MCF 10A (cell line): ENCODE measurements at regions of chr15 and their contacts with region 1.

Region 1: DNA sequence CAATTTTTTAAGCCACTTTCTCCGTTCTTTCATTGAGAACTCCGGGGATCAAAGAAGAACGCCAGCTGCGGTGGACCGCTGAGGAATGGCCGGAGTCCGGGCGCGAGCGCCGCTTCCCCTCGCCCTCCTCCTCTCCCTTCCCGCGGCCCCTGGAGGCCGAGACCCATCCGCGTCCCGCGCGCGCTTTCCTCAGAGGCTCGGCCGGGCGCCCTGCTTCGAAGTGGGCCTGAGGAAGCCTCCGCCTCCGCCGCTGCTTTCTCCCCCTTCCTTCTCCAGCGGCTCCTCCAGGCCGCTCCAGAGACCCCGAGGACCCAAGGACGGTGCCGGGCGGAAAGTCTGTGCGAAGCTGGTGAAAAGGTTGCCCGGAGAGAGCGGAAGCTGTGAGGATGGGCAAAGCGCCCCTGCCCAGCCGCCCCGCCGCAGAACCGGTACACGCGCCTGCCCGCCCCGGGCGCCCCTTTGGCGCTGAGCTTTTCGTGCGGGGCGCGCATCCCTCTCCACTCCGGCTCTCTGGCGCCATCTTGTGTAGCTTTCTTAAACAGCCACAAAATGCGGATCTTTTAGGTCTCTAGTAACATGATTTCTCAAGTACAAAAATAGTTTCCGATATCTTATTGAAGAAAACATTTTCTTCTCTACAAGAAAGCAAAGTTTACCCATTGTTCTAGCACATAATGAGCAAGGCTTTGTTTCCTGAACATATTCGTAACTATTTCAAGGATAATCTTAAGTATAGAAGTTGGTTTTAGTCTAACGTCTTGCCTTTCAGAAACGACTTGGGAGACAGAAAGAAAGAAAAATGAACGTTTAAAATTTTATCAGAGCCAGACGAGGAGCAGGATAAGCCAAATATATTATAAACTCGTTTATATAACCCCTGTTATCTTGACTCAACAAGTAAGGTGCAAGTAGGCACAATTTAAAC is 59.2 kb upstream of the FAM174B start:
- DNase-seq: peak; percentile 67
- H3K4me3 Mint-ChIP-seq: peak overlapping the region; percentile 69
- H3K27ac Mint-ChIP-seq: no peak overlapping the region
- H3K4me1 Mint-ChIP-seq: no peaks in the 10 kb centered on the region
- H3K27me3 Mint-ChIP-seq: peaks cover 12% of the 10 kb centered on the region
- CTCF ChIP-seq: peak; percentile 89

Region 2: DNA sequence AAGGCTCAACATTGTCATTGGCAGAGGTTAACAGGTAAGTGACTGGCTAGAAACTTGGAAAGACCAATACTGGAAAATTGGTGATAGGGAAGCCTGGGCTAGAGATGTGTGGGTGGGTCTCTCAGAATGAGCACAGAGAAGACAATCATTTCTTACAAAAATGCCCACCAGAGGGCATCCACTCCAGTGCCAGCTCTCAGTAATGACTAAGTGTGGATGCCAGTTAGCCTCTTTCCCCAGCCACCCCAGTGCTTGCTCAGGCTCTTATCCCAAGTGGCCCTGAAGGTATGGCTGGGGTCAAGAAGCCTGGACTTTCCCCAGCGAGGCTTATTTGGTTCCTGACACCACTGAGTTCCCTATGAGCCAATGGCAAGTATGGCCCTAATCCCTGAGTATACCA is 437.0 kb before region 1 on chr15:
- CTCF ChIA-PET with region 1: interaction called, 6 read pairs
- POLR2A ChIA-PET with region 1: interaction called, 3 read pairs
- intact Hi-C with region 1: loop called (anchors 1 kb)
- DNase-seq: peak; percentile 53
- H3K4me3 Mint-ChIP-seq: no peak overlapping the region
- H3K27ac Mint-ChIP-seq: no peak overlapping the region
- H3K4me1 Mint-ChIP-seq: no peaks in the 10 kb centered on the region
- H3K27me3 Mint-ChIP-seq: peaks cover 29% of the 10 kb centered on the region
- CTCF ChIP-seq: peak; percentile 32

Region 3: DNA sequence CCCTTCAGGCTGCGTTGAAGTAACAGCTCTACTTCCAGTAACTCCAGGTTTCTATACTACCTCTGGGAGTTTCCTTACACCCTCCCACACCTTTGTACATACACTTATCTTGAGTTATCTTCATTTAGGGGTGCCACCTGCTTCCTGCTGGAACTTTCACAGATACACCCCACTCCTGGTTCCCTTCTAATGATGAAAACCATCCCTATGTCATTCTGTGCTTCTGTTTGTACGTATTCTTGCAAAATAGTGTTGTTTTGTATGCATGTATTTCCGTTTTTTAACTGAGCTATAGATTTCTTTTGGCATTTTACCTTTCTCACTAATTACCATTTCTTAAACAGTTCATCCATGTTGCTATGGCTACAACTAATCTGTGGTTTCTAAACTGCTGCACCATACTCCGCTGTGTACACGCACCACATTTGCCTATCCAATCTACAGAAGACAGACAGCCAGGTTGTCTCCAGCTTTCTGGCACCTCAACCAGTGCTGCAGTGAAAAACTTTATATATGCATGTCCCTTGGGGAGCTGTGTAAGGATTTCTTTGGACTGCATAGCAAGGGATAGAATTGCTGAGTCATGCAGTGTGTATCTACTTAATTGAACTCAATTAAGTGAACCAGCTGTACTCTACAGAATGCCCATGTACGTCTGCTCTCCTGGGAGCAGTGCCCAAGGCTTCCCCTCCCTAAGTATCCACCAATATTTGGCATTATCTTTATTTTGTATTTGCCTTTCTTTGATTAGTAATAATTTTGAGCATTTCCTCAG is 382.4 kb before region 1 on chr15:
- CTCF ChIA-PET with region 1: no interaction called
- POLR2A ChIA-PET with region 1: no interaction called
- intact Hi-C with region 1: loop called (anchors 10 kb)
- DNase-seq: no peak
- H3K4me3 Mint-ChIP-seq: no peak overlapping the region
- H3K27ac Mint-ChIP-seq: no peak overlapping the region
- H3K4me1 Mint-ChIP-seq: no peaks in the 10 kb centered on the region
- H3K27me3 Mint-ChIP-seq: peaks cover 29% of the 10 kb centered on the region
- CTCF ChIP-seq: no peak

Region 4: GRCh38 chr15:92391640-92392039 is 323.1 kb before region 1 on chr15:
- CTCF ChIA-PET with region 1: interaction called, 3 read pairs
- POLR2A ChIA-PET with region 1: no interaction called
- intact Hi-C with region 1: loop called (anchors 5 kb)
- DNase-seq: peak; percentile 51
- H3K4me3 Mint-ChIP-seq: no peak overlapping the region
- H3K27ac Mint-ChIP-seq: no peak overlapping the region
- H3K4me1 Mint-ChIP-seq: no peaks in the 10 kb centered on the region
- H3K27me3 Mint-ChIP-seq: peaks cover 100% of the 10 kb centered on the region
- CTCF ChIP-seq: no peak

Region 5: GRCh38 chr15:92521624-92522008 is 193.1 kb before region 1 on chr15:
- CTCF ChIA-PET with region 1: interaction called, 58 read pairs
- POLR2A ChIA-PET with region 1: interaction called, 5 read pairs
- intact Hi-C with region 1: loop called (anchors 1 kb)
- DNase-seq: peak; percentile 77
- H3K4me3 Mint-ChIP-seq: no peak overlapping the region
- H3K27ac Mint-ChIP-seq: no peak overlapping the region
- H3K4me1 Mint-ChIP-seq: peaks cover 6% of the 10 kb centered on the region
- H3K27me3 Mint-ChIP-seq: peaks cover 11% of the 10 kb centered on the region
- CTCF ChIP-seq: peak; percentile 59

Region 6: GRCh38 chr15:92617549-92618520 is 96.9 kb before region 1 on chr15:
- CTCF ChIA-PET with region 1: no interaction called
- POLR2A ChIA-PET with region 1: no interaction called
- intact Hi-C with region 1: loop called (anchors 10 kb)
- DNase-seq: no peak
- H3K4me3 Mint-ChIP-seq: no peak overlapping the region
- H3K27ac Mint-ChIP-seq: no peak overlapping the region
- H3K4me1 Mint-ChIP-seq: peaks cover 9% of the 10 kb centered on the region
- H3K27me3 Mint-ChIP-seq: no peaks in the 10 kb centered on the region
- CTCF ChIP-seq: no peak

Region 7: GRCh38 chr15:92663250-92663951 is 51.3 kb before region 1 on chr15:
- CTCF ChIA-PET with region 1: no interaction called
- POLR2A ChIA-PET with region 1: no interaction called
- intact Hi-C with region 1: no loop called
- DNase-seq: no peak
- H3K4me3 Mint-ChIP-seq: no peak overlapping the region
- H3K27ac Mint-ChIP-seq: no peak overlapping the region
- H3K4me1 Mint-ChIP-seq: no peaks in the 10 kb centered on the region
- H3K27me3 Mint-ChIP-seq: no peaks in the 10 kb centered on the region
- CTCF ChIP-seq: no peak

Region 8: GRCh38 chr15:93141371-93141794 is 426.6 kb after region 1 on chr15:
- CTCF ChIA-PET with region 1: no interaction called
- POLR2A ChIA-PET with region 1: no interaction called
- intact Hi-C with region 1: no loop called
- DNase-seq: no peak
- H3K4me3 Mint-ChIP-seq: no peak overlapping the region
- H3K27ac Mint-ChIP-seq: no peak overlapping the region
- H3K4me1 Mint-ChIP-seq: no peaks in the 10 kb centered on the region
- H3K27me3 Mint-ChIP-seq: no peaks in the 10 kb centered on the region
- CTCF ChIP-seq: no peak